Body of pancreas (tissue), 4 donors: ENCODE measurements at regions of chr18 and their contacts with region 1.

Region 1: DNA sequence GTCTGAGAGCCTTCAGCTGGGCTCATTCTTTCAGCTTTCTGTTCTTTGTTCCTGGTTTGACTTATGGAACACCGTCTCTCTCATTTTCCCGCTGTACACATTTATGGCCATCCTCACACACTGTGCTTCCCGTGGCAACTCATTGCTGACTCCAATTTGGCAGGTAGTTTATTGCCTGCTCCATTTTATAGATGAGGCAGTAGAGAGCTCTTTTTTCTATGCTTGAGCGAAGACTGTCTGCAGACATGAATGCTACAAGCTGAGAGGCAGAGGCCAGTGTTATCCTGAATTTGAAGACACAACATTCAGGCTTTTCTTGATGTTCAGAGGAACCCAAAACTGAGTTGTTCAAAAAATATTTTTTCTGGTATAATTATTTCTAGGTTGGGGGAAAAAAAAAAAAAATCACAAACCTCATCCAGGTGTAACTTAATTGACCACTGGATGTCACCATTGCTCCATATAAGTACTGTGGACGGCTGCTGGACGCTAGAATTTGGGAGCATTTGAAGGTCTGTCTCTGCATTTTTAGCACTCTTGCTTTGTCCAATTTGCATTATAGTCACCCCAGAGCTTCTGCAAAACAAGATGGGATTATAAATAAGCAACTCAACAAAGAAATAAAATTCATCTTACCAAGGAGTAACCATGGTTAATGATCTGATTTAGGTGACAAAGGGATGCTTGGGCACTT is 83.5 kb downstream of the HRH4 start:
- DNase-seq: no peak
- ATAC-seq: no peak
- H3K4me3 ChIP-seq: no peak overlapping the region
- H3K27ac ChIP-seq: no peak overlapping the region
- H3K4me1 ChIP-seq: no peaks in the 10 kb centered on the region
- H3K27me3 ChIP-seq: no peaks in the 10 kb centered on the region
- CTCF ChIP-seq: peak; percentile 14 to 52 (median 44)
- POLR2A ChIP-seq: no peak

Region 2: GRCh38 chr18:24726727-24727492 is 183.0 kb after region 1 on chr18:
- intact Hi-C with region 1: loop called (anchors 10 kb)
- DNase-seq: peak; percentile 60 to 70 (median 67)
- ATAC-seq: peak; percentile 55
- H3K4me3 ChIP-seq: no peak overlapping the region
- H3K27ac ChIP-seq: no peak overlapping the region
- H3K4me1 ChIP-seq: no peaks in the 10 kb centered on the region
- H3K27me3 ChIP-seq: no peaks in the 10 kb centered on the region
- CTCF ChIP-seq: peak; percentile 66 to 81 (median 77)
- POLR2A ChIP-seq: no peak